ENCODE measurements at regions of chr18 and their contacts with region 1.

Region 1: DNA sequence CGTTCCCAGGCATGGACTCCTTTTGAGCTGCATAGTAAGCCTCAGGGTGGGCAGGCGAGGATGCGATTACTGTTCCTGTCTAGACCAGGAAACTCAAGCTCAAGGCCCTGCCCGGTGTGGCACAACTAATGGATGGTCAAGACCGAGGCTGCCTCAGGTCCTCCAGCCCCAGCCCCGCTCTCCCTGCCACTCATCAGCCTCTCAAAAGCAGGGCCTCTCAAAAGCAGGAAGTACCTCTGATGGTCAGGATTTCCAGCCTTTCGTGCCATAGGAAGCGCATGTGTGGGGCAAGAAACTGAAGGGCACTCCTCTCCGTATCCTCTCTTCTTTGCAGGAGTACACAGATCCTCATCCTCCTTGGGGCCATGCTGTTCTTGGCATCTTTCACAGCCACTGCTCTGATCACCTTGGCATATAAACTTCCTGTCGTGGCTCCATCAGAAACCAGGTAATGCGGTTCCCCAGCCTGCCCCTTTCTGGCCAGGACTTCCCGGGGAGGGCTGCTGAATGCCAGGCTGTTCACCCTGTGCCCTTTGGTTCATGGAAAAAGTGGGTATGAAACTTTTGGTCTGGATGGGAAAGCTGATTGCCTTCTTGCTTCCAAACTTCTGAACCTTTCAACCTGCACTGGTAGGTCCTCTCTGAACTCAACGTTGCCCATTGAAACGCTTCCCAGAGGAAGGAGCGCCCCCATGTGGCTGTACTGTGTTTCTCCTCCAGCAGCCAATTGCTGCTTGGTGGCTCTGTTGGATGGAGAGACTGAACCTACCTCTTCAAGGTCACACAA is 82.8 kb upstream of the SEC11C start:
- DNase-seq: peak; percentile 72
- ATAC-seq: peak; percentile 95
- H3K4me3 Mint-ChIP-seq: no peak overlapping the region
- H3K27ac Mint-ChIP-seq: peak overlapping the region; percentile 37
- H3K4me1 Mint-ChIP-seq: peaks cover 10% of the 10 kb centered on the region
- H3K27me3 Mint-ChIP-seq: no peaks in the 10 kb centered on the region
- CTCF ChIP-seq: no peak

Region 2: DNA sequence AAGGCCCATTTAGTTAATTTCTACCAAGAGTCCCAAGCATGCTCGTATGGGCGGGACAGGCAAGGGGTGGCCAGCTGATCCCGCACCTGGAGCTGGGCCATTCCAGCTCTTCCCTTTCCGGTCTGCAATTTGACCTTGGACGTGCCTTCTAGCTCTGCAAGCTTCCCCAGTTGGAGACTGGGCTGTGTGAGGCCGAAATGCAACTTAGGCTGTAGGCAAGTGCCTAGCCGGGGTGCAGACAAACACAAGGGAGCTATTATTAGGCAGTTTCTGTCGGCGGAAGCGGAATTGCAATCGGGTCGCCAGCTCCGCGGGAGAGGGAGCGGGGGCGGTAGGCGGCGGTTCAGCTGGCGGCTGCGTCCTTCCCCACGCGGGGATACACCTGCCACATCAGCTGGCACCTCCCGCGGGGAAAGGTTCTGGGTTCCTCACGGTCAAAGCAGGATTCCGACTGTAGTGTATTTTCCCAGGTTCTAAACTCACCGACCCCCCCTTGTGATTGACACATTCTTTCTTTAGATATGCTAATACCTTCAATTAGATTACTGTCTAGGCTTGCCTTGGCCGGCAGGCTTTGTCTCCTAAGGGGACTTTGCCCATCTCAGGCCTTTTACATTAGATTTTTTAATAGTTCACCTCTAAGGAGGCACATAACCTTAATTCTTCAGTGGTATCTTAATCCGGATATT is 209.4 kb before region 1 on chr18:
- CTCF ChIA-PET with region 1: no interaction called
- POLR2A ChIA-PET with region 1: no interaction called
- intact Hi-C with region 1: loop called (anchors 5 kb)
- DNase-seq: peak; percentile 34
- ATAC-seq: peak; percentile 58
- H3K4me3 Mint-ChIP-seq: peak overlapping the region; percentile 81
- H3K27ac Mint-ChIP-seq: peak overlapping the region; percentile 25
- H3K4me1 Mint-ChIP-seq: peaks cover 20% of the 10 kb centered on the region
- H3K27me3 Mint-ChIP-seq: peaks cover 7% of the 10 kb centered on the region
- CTCF ChIP-seq: no peak

Region 3: GRCh38 chr18:58896268-58896667 is 160.6 kb before region 1 on chr18:
- CTCF ChIA-PET with region 1: no interaction called
- POLR2A ChIA-PET with region 1: no interaction called
- intact Hi-C with region 1: loop called (anchors 1 kb)
- DNase-seq: no peak
- ATAC-seq: peak; percentile 92
- H3K4me3 Mint-ChIP-seq: peak overlapping the region; percentile 80
- H3K27ac Mint-ChIP-seq: peak overlapping the region; percentile 81
- H3K4me1 Mint-ChIP-seq: peaks cover 82% of the 10 kb centered on the region
- H3K27me3 Mint-ChIP-seq: no peaks in the 10 kb centered on the region
- CTCF ChIP-seq: no peak

Region 4: GRCh38 chr18:58967751-58968254 is 89.1 kb before region 1 on chr18:
- CTCF ChIA-PET with region 1: interaction called, 5 read pairs
- POLR2A ChIA-PET with region 1: interaction called, 12 read pairs
- intact Hi-C with region 1: loop called (anchors 1 kb)
- DNase-seq: no peak
- ATAC-seq: no peak
- H3K4me3 Mint-ChIP-seq: peak overlapping the region; percentile 46
- H3K27ac Mint-ChIP-seq: peak overlapping the region; percentile 94
- H3K4me1 Mint-ChIP-seq: peaks cover 94% of the 10 kb centered on the region
- H3K27me3 Mint-ChIP-seq: no peaks in the 10 kb centered on the region
- CTCF ChIP-seq: no peak

Region 5: GRCh38 chr18:59070181-59070912 is 13.4 kb after region 1 on chr18:
- CTCF ChIA-PET with region 1: interaction called, 24 read pairs
- POLR2A ChIA-PET with region 1: no interaction called
- intact Hi-C with region 1: loop called (anchors 1 kb)
- DNase-seq: peak; percentile 68
- ATAC-seq: peak; percentile 85
- H3K4me3 Mint-ChIP-seq: no peak overlapping the region
- H3K27ac Mint-ChIP-seq: peak overlapping the region; percentile 54
- H3K4me1 Mint-ChIP-seq: peaks cover 25% of the 10 kb centered on the region
- H3K27me3 Mint-ChIP-seq: no peaks in the 10 kb centered on the region
- CTCF ChIP-seq: peak; percentile 39

Measured in activated B cell treated with CpG ODN at 0.5 μM for 24 hours (primary cell).